MCF 10A (cell line): ENCODE measurements at regions of chr18 and their contacts with region 1.

Region 1: GRCh38 chr18:50967714-50968661 is at the start of gene ELAC1:
- DNase-seq: peak; percentile 72
- H3K4me3 Mint-ChIP-seq: peak within 1 kb of the TSS; percentile 68
- H3K27ac Mint-ChIP-seq: peak within 1 kb of the TSS; percentile 75
- H3K4me1 Mint-ChIP-seq: peaks cover 27% of the 10 kb centered on the region
- H3K27me3 Mint-ChIP-seq: no peaks in the 10 kb centered on the region
- CTCF ChIP-seq: no peak
- total RNA-seq, gene ELAC1: 10.8 and 14.0 TPM in 2 replicates

Region 2: GRCh38 chr18:50707855-50708469 is 260.0 kb before region 1 on chr18:
- CTCF ChIA-PET with region 1: no interaction called
- POLR2A ChIA-PET with region 1: no interaction called
- intact Hi-C with region 1: no loop called
- DNase-seq: peak; percentile 51
- H3K4me3 Mint-ChIP-seq: no peak overlapping the region
- H3K27ac Mint-ChIP-seq: no peak overlapping the region
- H3K4me1 Mint-ChIP-seq: no peaks in the 10 kb centered on the region
- H3K27me3 Mint-ChIP-seq: peaks cover 17% of the 10 kb centered on the region
- CTCF ChIP-seq: no peak

Region 3: GRCh38 chr18:50866765-50867164 is 101.2 kb before region 1 on chr18:
- CTCF ChIA-PET with region 1: no interaction called
- POLR2A ChIA-PET with region 1: interaction called, 13 read pairs
- intact Hi-C with region 1: no loop called
- DNase-seq: peak; percentile 22
- H3K4me3 Mint-ChIP-seq: no peak overlapping the region
- H3K27ac Mint-ChIP-seq: no peak overlapping the region
- H3K4me1 Mint-ChIP-seq: peaks cover 12% of the 10 kb centered on the region
- H3K27me3 Mint-ChIP-seq: no peaks in the 10 kb centered on the region
- CTCF ChIP-seq: peak; percentile 7

Region 4: GRCh38 chr18:50956116-50956515 is 11.9 kb before region 1 on chr18:
- CTCF ChIA-PET with region 1: interaction called, 5 read pairs
- POLR2A ChIA-PET with region 1: interaction called, 11 read pairs
- intact Hi-C with region 1: no loop called
- DNase-seq: no peak
- H3K4me3 Mint-ChIP-seq: no peak overlapping the region
- H3K27ac Mint-ChIP-seq: no peak overlapping the region
- H3K4me1 Mint-ChIP-seq: no peaks in the 10 kb centered on the region
- H3K27me3 Mint-ChIP-seq: no peaks in the 10 kb centered on the region
- CTCF ChIP-seq: no peak

Region 5: DNA sequence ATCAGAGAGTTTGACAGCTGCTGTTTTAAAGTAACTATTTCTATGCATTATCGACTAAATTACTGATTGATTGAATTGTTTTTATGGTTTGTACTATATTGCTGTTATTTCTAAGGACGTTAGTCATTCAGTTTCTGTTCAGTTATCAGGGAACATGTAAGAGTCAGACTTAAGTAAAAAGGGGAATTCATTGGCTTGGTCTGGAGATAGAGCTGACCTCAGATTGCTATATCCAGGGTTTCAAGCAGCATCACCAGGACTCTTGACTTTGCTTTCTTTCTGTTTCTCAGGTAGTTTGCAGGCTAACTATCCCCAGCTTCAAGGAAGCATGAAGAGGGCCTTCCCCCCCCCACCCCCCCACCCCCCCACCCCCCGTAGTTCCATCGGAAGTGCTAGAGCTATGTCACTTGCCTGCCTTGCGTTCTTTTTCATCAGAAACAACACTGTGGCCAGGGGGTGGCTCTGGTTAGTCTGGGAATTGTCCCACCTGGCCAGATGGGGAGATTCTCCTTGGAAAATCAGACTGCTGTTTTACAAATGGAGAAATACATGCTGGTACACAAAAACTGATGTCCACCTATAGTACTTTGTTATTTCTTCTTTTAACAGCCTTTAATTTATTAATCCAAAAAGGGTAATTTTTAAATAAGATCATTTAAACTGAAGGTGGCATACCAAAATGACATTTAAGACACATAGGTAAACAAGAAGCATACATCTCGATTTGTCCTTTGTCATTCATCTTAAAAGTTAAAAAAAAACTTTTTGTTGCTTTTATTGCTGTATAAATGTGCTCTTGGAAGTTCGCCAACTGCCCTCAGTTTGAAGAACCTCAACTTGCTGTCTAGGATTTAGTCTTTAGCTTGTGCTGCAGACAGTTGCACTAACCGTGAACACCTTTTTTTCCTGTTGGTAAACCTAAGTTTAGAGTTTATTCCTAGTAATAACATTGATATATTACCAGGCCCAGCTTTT is 71.4 kb after region 1 on chr18:
- CTCF ChIA-PET with region 1: interaction called, 3 read pairs
- POLR2A ChIA-PET with region 1: interaction called, 13 read pairs
- intact Hi-C with region 1: no loop called
- DNase-seq: no peak
- H3K4me3 Mint-ChIP-seq: no peak overlapping the region
- H3K27ac Mint-ChIP-seq: peak overlapping the region; percentile 19
- H3K4me1 Mint-ChIP-seq: peaks cover 43% of the 10 kb centered on the region
- H3K27me3 Mint-ChIP-seq: no peaks in the 10 kb centered on the region
- CTCF ChIP-seq: no peak